ENCODE measurements at regions of chr1 and their contacts with region 1.

Region 1: DNA sequence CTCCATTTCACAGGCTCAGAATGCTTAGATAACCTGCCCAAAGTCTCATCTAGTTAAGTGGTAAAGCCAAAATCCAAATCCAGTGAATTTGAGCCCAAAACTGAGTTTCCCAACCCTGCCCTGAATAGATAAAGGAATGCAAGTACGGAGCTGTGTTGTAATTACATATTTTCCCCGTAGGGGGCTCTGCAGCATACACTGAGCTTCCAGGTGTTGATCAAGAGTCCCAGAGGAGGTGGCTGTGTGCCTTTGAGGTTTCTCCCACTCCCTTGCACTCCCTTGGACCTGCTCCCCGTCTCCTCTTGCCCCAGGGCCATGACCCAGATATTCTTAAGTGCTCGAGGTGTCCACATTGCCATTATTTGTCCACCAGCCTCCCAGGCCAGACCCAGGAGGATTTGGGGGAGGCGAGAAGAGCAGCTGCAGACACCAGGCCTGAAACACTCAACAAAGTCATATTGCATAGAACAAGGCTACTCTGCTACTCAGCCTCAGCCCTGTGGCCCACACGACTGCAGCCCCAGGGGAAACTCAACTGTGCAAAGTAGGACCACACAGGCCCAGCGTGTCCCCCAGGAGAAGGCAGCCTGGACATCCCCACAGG is 18.4 kb upstream of the LY9 start:
- DNase-seq: peak; percentile 72
- ATAC-seq: peak; percentile 67
- H3K4me3 Mint-ChIP-seq: no peak overlapping the region
- H3K27ac Mint-ChIP-seq: peak overlapping the region; percentile 4
- H3K4me1 Mint-ChIP-seq: peaks cover 55% of the 10 kb centered on the region
- H3K27me3 Mint-ChIP-seq: no peaks in the 10 kb centered on the region
- CTCF ChIP-seq: peak; percentile 85

Region 2: GRCh38 chr1:160711602-160712311 is 65.8 kb before region 1 on chr1 and contains the start of gene CD48:
- CTCF ChIA-PET with region 1: interaction called, 10 read pairs
- POLR2A ChIA-PET with region 1: interaction called, 4 read pairs
- intact Hi-C with region 1: no loop called
- DNase-seq: peak; percentile 75
- ATAC-seq: peak; percentile 37
- H3K4me3 Mint-ChIP-seq: no peak within 1 kb of the TSS
- H3K27ac Mint-ChIP-seq: no peak within 1 kb of the TSS
- H3K4me1 Mint-ChIP-seq: peaks cover 37% of the 10 kb centered on the region
- H3K27me3 Mint-ChIP-seq: no peaks in the 10 kb centered on the region
- CTCF ChIP-seq: no peak
- total RNA-seq, gene CD48: 379 to 388 TPM

Region 3: GRCh38 chr1:160739098-160739511 is 38.5 kb before region 1 on chr1 and contains the start of gene SLAMF7:
- CTCF ChIA-PET with region 1: interaction called, 29 read pairs
- POLR2A ChIA-PET with region 1: no interaction called
- intact Hi-C with region 1: no loop called
- DNase-seq: peak; percentile 82
- ATAC-seq: peak; percentile 75
- H3K4me3 Mint-ChIP-seq: peak within 1 kb of the TSS; percentile 84
- H3K27ac Mint-ChIP-seq: peak within 1 kb of the TSS; percentile 94
- H3K4me1 Mint-ChIP-seq: peaks cover 75% of the 10 kb centered on the region
- H3K27me3 Mint-ChIP-seq: no peaks in the 10 kb centered on the region
- CTCF ChIP-seq: no peak
- total RNA-seq, gene SLAMF7: 90.0 to 93.5 TPM

Region 4: DNA sequence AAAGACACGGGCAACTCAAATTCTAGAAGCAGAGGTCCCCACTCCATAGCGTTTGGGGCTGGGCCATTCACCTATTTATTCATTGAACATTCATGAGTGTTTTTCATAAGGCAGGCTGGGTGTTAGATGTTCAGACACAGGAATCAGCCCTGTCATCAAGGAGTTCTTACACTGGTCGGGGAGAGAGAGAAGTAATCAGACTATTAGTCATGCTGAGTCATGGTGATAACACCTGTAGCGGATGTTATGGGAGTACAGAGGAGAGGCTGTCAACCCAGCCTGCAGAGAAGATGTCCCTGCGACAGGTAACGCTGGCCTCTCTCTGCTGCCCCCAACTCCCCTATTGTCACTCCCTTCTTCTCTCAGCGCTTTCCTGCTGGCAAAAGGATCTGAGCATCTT is 35.6 kb after region 1 on chr1:
- CTCF ChIA-PET with region 1: interaction called, 76 read pairs
- POLR2A ChIA-PET with region 1: interaction called, 5 read pairs
- intact Hi-C with region 1: loop called (anchors 5 kb)
- DNase-seq: no peak
- ATAC-seq: peak; percentile 87
- H3K4me3 Mint-ChIP-seq: no peak overlapping the region
- H3K27ac Mint-ChIP-seq: peak overlapping the region; percentile 78
- H3K4me1 Mint-ChIP-seq: peaks cover 54% of the 10 kb centered on the region
- H3K27me3 Mint-ChIP-seq: no peaks in the 10 kb centered on the region
- CTCF ChIP-seq: no peak

Region 5: DNA sequence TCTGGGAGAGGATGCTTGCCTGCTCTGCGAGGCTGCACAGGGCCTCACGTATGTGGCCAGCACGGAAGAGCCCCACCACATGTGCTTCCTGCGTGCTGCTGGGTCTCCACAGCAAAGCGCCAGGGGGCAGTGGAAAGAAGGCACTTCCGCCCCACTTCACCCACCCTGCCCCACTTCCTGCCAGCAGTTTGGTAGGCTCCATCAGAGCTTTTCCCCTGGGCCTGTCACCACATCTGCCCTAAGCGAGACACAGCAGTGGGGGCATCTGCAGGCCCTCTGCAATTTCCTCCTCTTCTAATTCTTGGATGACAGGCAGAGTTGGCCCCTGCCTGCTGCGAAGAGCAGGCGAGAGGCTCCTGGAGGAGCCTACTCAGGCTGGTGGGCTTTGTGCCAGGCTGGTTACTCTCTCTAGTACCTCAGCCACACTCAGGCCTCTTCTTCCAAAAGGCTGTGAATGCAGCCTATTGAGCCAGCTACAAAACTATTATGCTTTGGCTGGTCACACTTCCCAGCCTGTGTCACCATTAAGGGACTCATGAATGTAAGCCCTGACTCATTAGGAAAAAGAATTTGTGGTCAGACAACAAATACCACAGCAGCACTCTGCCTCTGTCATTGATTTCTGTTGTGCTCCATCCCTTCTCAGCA is 60.1 kb after region 1 on chr1:
- CTCF ChIA-PET with region 1: interaction called, 91 read pairs
- POLR2A ChIA-PET with region 1: interaction called, 5 read pairs
- intact Hi-C with region 1: no loop called
- DNase-seq: peak; percentile 92
- ATAC-seq: peak; percentile 90
- H3K4me3 Mint-ChIP-seq: peak overlapping the region; percentile 57
- H3K27ac Mint-ChIP-seq: peak overlapping the region; percentile 99
- H3K4me1 Mint-ChIP-seq: peaks cover 72% of the 10 kb centered on the region
- H3K27me3 Mint-ChIP-seq: no peaks in the 10 kb centered on the region
- CTCF ChIP-seq: peak; percentile 44

Measured in activated CD8-positive, alpha-beta T cell treated with anti-CD3 and anti-CD28 coated beads for 36 hours (primary cell).